ENCODE measurements at regions of chr2 and their contacts with region 1.

Region 1: DNA sequence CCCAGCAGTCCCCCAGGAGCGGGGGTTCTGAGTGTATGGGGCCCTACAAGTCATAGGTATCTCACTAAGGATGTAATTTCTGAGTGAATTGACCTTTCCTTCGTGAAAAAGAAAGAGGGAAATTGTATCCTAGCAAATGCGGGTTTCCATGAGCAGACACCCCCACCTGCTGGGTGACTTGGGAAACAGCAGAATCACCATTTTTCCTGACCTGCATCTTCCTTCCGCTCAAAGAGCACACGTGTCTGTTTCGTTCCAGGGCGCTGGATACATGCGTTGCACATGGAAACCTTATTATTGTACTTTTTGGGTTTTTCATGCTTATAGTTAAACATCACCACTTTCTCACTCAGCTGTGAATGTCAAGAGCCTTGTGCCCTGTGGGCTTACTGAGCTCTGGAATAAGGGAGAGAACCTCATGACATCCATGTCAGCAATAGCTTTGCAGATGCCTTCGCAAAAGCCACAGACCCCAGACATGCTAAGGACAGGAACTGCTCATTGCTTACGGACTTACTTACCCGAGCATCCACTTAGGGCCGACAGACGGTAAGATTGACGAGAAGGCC is 132.8 kb downstream of the TPO start:
- DNase-seq: peak in 1 of 2 experiments; percentile 70
- H3K4me3 ChIP-seq: no peak overlapping the region
- H3K4me3 Mint-ChIP-seq: no peak overlapping the region
- H3K27ac Mint-ChIP-seq: no peak overlapping the region
- H3K4me1 ChIP-seq: peaks cover 16% of the 10 kb centered on the region
- H3K4me1 Mint-ChIP-seq: peaks cover 14% of the 10 kb centered on the region
- H3K27me3 ChIP-seq: no peaks in the 10 kb centered on the region
- H3K27me3 Mint-ChIP-seq: no peaks in the 10 kb centered on the region
- CTCF ChIP-seq: peak; percentile 79 to 81

Region 2: GRCh38 chr2:529425-529824 is 1016.7 kb before region 1 on chr2:
- CTCF ChIA-PET with region 1: no interaction called
- POLR2A ChIA-PET with region 1: no interaction called
- intact Hi-C with region 1: loop called (anchors 10 kb)
- DNase-seq: no peak
- H3K4me3 ChIP-seq: no peak overlapping the region
- H3K4me3 Mint-ChIP-seq: no peak overlapping the region
- H3K27ac Mint-ChIP-seq: no peak overlapping the region
- H3K4me1 ChIP-seq: no peaks in the 10 kb centered on the region
- H3K4me1 Mint-ChIP-seq: no peaks in the 10 kb centered on the region
- H3K27me3 ChIP-seq: no peaks in the 10 kb centered on the region
- H3K27me3 Mint-ChIP-seq: no peaks in the 10 kb centered on the region
- CTCF ChIP-seq: peak in 1 of 2 experiments; percentile 14

Region 3: GRCh38 chr2:860259-860855 is 685.8 kb before region 1 on chr2:
- CTCF ChIA-PET with region 1: no interaction called
- POLR2A ChIA-PET with region 1: no interaction called
- intact Hi-C with region 1: loop called (anchors 2 kb)
- DNase-seq: no peak
- H3K4me3 ChIP-seq: no peak overlapping the region
- H3K4me3 Mint-ChIP-seq: no peak overlapping the region
- H3K27ac Mint-ChIP-seq: no peak overlapping the region
- H3K4me1 ChIP-seq: no peaks in the 10 kb centered on the region
- H3K4me1 Mint-ChIP-seq: no peaks in the 10 kb centered on the region
- H3K27me3 ChIP-seq: no peaks in the 10 kb centered on the region
- H3K27me3 Mint-ChIP-seq: peaks cover 14% of the 10 kb centered on the region
- CTCF ChIP-seq: peak in 1 of 2 experiments; percentile 8

Region 4: DNA sequence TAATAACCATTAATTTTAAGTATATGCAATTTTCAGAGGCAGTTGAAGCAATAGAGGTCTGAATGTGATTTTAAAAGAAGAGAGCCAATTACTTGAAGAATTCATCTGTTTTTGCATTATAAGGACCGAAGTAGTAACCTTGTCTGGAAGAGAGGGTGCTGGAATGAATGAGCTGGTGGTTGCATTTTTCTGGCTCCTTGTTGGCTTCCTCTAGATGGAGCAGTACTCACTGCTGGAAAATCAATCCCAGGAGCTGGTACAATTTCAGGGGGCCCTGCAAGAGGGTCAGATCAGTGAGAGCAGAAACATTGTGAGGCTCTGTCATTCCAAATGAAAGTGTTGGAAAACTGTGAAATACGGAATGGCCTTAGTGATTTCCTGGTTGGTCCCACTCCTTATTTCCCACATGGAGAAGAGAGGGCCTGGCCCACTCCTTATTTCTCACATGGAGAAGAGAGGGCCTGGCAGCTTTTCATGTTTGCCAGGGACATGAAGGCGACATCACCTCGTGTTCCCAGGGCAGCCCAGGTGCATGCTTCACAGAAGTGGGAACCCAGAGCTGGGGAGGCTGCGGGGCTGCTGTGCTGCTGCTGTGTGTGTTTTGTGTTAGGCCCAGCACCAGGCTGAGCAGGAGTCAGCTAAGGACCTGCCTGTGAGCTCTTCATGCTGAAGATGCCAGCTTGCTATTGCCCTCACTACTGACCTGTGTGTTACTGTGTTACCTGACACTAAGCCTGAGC is 398.1 kb before region 1 on chr2:
- CTCF ChIA-PET with region 1: no interaction called
- POLR2A ChIA-PET with region 1: no interaction called
- intact Hi-C with region 1: loop called (anchors 5 kb)
- DNase-seq: no peak
- H3K4me3 ChIP-seq: no peak overlapping the region
- H3K4me3 Mint-ChIP-seq: no peak overlapping the region
- H3K27ac Mint-ChIP-seq: no peak overlapping the region
- H3K4me1 ChIP-seq: no peaks in the 10 kb centered on the region
- H3K4me1 Mint-ChIP-seq: no peaks in the 10 kb centered on the region
- H3K27me3 ChIP-seq: no peaks in the 10 kb centered on the region
- H3K27me3 Mint-ChIP-seq: peaks cover 4% of the 10 kb centered on the region
- CTCF ChIP-seq: no peak

Region 5: GRCh38 chr2:1653956-1654695 is 108.0 kb after region 1 on chr2:
- CTCF ChIA-PET with region 1: no interaction called
- POLR2A ChIA-PET with region 1: no interaction called
- intact Hi-C with region 1: no loop called
- DNase-seq: no peak
- H3K4me3 ChIP-seq: no peak overlapping the region
- H3K4me3 Mint-ChIP-seq: no peak overlapping the region
- H3K27ac Mint-ChIP-seq: no peak overlapping the region
- H3K4me1 ChIP-seq: no peaks in the 10 kb centered on the region
- H3K4me1 Mint-ChIP-seq: no peaks in the 10 kb centered on the region
- H3K27me3 ChIP-seq: no peaks in the 10 kb centered on the region
- H3K27me3 Mint-ChIP-seq: peaks cover 4% of the 10 kb centered on the region
- CTCF ChIP-seq: no peak

Region 6: GRCh38 chr2:1817256-1818051 is 271.3 kb after region 1 on chr2:
- CTCF ChIA-PET with region 1: no interaction called
- POLR2A ChIA-PET with region 1: no interaction called
- intact Hi-C with region 1: loop called (anchors 1 kb)
- DNase-seq: peak; percentile 62 to 80
- H3K4me3 ChIP-seq: no peak overlapping the region
- H3K4me3 Mint-ChIP-seq: no peak overlapping the region
- H3K27ac Mint-ChIP-seq: no peak overlapping the region
- H3K4me1 ChIP-seq: no peaks in the 10 kb centered on the region; the same call in 1 of the 2 replicates
- H3K4me1 Mint-ChIP-seq: no peaks in the 10 kb centered on the region
- H3K27me3 ChIP-seq: no peaks in the 10 kb centered on the region
- H3K27me3 Mint-ChIP-seq: peaks cover 14% of the 10 kb centered on the region
- CTCF ChIP-seq: peak; percentile 93 to 95

Measured in Caco-2 (cell line).